Head of caudate nucleus (tissue), 42 donors: ENCODE measurements at regions of chr9 and their contacts with region 1.

Region 1: DNA sequence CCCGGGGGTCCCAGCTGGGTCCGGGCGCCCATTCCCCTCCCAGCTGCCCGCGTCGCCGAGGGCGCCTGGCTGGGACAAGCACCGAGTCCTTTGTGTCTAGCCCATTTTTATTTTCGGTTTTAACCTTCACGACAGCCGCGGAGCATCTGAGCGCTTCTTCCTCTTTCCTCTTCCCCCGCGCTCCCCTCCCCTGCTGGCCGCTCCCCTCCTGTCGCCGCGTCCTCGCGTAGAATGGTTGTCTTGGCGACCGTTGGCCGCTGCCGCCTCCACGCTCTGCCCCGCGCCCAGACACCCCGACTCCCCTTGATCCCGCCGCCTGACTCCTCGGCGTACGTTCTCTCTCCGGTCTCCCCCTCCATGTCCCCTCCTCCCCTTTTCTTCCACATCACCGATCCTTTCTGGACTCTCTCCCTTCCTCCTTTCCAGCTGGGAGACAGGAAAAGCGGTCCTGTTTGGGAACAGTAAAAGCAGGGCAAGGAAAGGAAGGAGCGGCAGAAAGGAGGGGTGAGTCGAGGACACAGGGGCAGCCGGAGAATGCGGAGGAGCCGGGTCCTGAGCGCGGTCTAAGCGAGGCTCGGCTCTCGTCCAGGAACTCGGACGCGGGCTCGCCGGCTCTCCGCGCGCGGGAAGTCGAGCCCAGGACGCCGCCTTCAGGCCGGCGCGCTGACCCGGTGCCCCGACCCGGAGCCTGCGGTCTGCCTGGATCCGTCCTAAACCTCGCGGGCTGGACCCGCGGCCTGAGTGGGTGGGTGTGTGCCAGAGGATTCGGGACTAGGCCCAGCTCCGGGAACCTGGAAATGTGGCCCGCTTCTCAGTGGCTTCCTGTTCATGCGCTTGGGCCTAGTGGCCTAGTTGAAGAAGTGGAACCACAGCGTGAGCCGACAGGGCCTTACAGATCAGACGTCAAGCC is 841 bp downstream of the CDKN2B-AS1 start:
- DNase-seq: peak in 39 of 42 donors; percentile 41 to 83 (median 62)

Region 2: DNA sequence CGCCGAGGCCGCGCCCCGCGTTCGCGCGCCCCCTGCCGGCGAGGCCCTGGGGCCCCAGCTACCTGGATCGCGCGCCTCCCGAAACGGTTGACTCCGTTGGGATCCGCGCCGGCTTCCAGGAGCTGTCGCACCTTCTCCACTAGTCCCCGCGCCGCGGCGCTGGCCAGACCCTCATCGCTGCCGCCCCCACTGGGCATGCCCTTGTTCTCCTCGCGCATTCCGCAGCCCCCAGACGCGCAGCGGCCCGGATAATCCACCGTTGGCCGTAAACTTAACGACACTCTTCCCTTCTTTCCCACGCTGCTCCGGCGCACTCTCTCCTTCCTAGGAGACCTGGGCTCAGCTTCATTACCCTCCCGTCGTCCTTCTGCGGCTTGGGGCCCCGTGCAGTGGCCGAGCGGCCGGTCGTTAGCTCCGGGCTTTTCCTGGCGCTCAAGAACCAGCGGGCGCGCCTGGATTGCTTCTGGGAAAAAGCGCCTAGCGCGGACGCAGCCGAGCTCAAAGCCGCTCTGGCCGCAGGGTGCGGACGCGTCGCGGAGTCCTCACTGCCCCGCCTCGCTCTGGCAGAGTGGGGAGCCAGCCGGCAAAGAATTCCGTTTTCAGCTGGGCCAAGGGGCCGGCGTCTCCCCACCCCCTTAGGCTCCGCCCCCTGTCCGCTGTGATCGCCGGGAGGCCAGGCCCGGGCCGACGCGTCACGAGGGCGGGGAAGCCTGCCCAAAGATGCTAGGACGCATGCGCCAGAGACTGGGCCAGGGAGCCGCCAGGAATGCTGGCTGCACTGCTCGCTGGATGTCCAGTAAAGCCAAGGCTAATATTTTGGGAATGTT is 13.5 kb after region 1 on chr9 and contains the start of gene CDKN2B:
- intact Hi-C with region 1: loop called (anchors 2 kb)
- DNase-seq: peak; percentile 82 to 97 (median 92)

Region 3: DNA sequence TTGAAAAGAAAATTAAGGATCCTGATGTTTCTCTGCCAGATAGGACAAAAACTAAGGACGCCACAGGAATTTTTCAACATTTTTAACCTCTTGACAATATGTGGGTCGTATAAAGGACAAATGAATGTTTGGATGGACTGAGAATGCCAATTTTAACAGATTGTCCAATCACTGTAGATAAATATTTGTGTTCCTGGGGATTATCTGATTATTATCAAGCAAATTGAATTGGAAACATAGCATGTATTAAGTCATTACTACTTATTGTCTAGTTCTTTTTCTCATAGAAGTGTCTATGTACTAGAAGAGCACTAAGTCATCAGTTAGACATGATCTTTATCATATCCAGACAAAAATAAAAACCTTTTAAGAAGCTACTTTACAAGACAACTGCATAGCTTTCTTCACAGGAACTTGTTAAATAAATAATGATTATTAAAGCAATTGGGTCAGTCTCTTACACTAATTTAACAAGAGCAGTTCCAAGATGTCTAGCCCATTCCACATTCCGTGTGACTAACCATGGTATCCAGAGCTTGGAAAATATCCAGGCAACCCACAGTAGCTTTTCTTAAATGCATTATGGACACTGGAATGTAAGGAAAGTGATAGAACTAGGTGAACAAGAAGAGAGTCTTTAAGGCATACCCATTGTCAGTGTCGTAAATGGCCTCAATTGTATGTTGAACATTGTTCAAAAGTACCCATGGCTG is 141.2 kb after region 1 on chr9:
- intact Hi-C with region 1: no loop called
- DNase-seq: no peak